HepG2 (cell line): ENCODE measurements at regions of chr2 and their contacts with region 1.

Region 1: DNA sequence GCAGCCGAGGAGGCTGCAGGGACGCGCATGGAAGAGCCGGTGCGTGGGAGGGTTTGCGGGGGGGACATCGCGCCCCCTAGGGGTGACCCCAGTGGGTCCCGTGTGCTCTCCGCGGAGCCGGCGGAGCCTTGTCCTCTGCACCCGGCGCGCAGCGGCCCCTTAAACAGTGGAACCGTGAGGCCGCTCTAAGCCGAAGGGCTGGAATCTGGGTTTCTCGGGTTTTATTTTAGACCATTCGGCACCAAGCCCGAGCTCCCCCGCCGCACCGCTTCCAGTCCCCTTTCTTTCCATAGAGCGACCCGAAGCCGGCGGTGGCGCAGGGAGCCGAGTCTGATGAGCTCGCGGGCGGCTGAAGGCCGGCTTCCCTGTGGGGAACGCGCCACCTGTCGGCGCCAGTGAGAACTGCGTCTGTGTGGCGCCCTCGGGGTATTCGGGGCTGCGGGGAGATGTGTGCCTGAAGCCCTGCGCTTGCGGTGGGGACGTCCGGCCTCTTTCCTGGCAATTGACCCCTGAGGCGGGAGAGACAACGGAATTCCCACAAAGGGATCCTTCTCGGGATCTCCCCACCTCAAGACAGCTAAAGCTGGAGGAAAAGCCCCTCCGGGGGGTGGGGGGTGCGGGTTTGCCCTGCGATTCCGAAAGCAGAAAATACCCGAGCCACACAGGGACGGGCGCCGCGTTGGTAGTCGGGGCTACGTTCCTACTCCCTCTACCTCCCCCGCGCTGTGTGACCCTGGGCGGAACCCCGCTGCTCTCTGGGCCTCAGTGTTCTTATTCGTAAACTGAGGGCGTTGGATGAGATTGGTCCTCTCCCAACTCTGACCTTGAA is 8.2 kb upstream of the EN1 start:
- DNase-seq: peak; percentile 60
- ATAC-seq: peak; percentile 93
- H3K4me3 ChIP-seq: peak overlapping the region in 1 of 3 experiments; percentile 34; a peak in 1 of 6 replicates
- H3K27ac ChIP-seq: no peak overlapping the region
- H3K4me1 ChIP-seq: no peaks in the 10 kb centered on the region
- H3K27me3 ChIP-seq: peaks cover 27 to 95% of the 10 kb centered on the region in 2 experiments
- CTCF ChIP-seq: peak; percentile 98
- EP300 ChIP-seq: no peak
- POLR2A ChIP-seq: no peak
- RAD21 ChIP-seq: peak; percentile 97

Region 2: GRCh38 chr2:118221666-118222594 is 633.7 kb before region 1 on chr2:
- CTCF ChIA-PET with region 1: interaction called, 20 read pairs
- POLR2A ChIA-PET with region 1: no interaction called
- in situ Hi-C with region 1: loop called (anchors 5 kb)
- intact Hi-C with region 1: no loop called
- DNase-seq: peak; percentile 61
- ATAC-seq: peak; percentile 97
- H3K4me3 ChIP-seq: no peak overlapping the region
- H3K27ac ChIP-seq: no peak overlapping the region
- H3K4me1 ChIP-seq: no peaks in the 10 kb centered on the region
- H3K27me3 ChIP-seq: peaks cover 2 to 14% of the 10 kb centered on the region in 2 experiments; a peak in 3 of 5 replicates
- CTCF ChIP-seq: peak; percentile 81
- EP300 ChIP-seq: no peak
- POLR2A ChIP-seq: no peak
- RAD21 ChIP-seq: peak; percentile 50; the same call in 1 of the 2 replicates

Region 3: DNA sequence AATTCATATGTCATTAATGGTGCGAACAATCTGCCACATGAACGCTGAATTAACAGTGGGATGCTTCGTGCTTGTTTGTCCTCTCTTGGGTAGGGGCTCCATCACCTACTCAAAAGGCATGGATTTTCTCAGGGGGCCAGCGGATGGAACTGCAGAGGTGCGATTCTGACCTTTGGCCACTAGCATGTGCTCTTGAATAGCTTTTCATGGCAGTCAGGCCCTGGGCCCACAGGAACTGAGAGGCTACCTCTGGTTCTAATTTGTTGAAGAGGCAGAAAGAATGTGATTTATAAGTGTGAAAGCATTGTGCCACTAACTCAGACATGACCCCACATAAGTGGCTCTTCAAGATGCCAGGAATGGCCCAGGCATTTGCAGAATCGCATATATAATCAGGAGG is 484.1 kb before region 1 on chr2:
- CTCF ChIA-PET with region 1: interaction called, 20 read pairs
- POLR2A ChIA-PET with region 1: no interaction called
- in situ Hi-C with region 1: loop called (anchors 5 kb)
- intact Hi-C with region 1: loop called (anchors 1 kb)
- DNase-seq: peak; percentile 42
- ATAC-seq: peak; percentile 99
- H3K4me3 ChIP-seq: no peak overlapping the region
- H3K27ac ChIP-seq: no peak overlapping the region
- H3K4me1 ChIP-seq: no peaks in the 10 kb centered on the region
- H3K27me3 ChIP-seq: no peaks in the 10 kb centered on the region; a peak in 2 of 5 replicates
- CTCF ChIP-seq: peak; percentile 89
- EP300 ChIP-seq: no peak
- POLR2A ChIP-seq: no peak
- RAD21 ChIP-seq: peak; percentile 64

Region 4: DNA sequence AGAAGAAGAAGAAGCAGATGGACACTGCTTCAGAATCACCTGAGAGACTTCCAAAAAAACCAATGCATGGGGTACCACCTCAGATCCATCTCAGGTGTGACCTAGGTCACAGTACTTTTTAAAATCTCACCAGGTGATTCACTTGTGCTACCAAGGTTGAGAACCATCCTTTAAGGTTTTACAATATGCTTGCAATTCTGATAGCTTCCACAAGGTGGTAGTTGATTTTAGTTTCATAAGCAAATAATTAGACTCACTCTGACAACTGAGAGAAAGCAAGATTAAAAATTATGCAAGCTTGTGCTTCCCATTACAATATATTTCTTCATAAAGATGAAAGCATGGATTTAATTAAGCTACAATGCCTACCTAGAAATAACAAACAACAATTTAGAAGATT is 363.3 kb before region 1 on chr2:
- CTCF ChIA-PET with region 1: interaction called, 3 read pairs
- POLR2A ChIA-PET with region 1: no interaction called
- in situ Hi-C with region 1: no loop called
- intact Hi-C with region 1: loop called (anchors 2 kb)
- DNase-seq: peak; percentile 23
- ATAC-seq: no peak
- H3K4me3 ChIP-seq: no peak overlapping the region
- H3K27ac ChIP-seq: no peak overlapping the region
- H3K4me1 ChIP-seq: no peaks in the 10 kb centered on the region
- H3K27me3 ChIP-seq: no peaks in the 10 kb centered on the region; a peak in 1 of 5 replicates
- CTCF ChIP-seq: peak; percentile 29; the same call in 1 of the 2 replicates
- EP300 ChIP-seq: no peak
- POLR2A ChIP-seq: no peak
- RAD21 ChIP-seq: no peak

Region 5: GRCh38 chr2:118539290-118539689 is 316.4 kb before region 1 on chr2:
- CTCF ChIA-PET with region 1: no interaction called
- POLR2A ChIA-PET with region 1: no interaction called
- in situ Hi-C with region 1: no loop called
- intact Hi-C with region 1: loop called (anchors 1 kb)
- DNase-seq: peak; percentile 14
- ATAC-seq: peak; percentile 79
- H3K4me3 ChIP-seq: no peak overlapping the region
- H3K27ac ChIP-seq: no peak overlapping the region
- H3K4me1 ChIP-seq: no peaks in the 10 kb centered on the region
- H3K27me3 ChIP-seq: no peaks in the 10 kb centered on the region
- CTCF ChIP-seq: peak; percentile 49
- EP300 ChIP-seq: no peak
- POLR2A ChIP-seq: no peak
- RAD21 ChIP-seq: no peak

Region 6: DNA sequence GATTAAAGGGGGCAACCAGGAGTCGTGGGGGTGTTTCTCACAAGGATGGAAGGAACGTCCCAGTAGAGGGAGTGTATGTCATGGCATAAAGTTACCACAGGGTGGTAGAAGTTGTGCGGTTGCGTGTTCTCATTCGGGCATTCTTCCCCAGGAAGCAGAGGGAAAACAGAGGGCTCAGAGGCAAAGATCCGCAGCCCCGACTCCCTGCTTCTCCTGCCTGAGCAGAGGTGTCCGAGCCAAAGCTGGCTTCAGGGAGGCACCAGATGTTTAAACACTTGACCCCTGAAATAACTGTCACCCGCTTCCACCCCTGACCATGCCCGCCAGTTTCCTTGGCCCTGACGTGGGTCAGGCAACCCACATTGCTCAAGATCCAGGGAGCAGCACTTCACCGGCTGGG is 91.9 kb before region 1 on chr2:
- CTCF ChIA-PET with region 1: no interaction called
- POLR2A ChIA-PET with region 1: no interaction called
- in situ Hi-C with region 1: no loop called
- intact Hi-C with region 1: loop called (anchors 2 kb)
- DNase-seq: peak; percentile 8
- ATAC-seq: peak; percentile 95
- H3K4me3 ChIP-seq: no peak overlapping the region
- H3K27ac ChIP-seq: no peak overlapping the region
- H3K4me1 ChIP-seq: no peaks in the 10 kb centered on the region
- H3K27me3 ChIP-seq: peaks cover 0 to 16% of the 10 kb centered on the region in 2 experiments; a peak in 3 of 5 replicates
- CTCF ChIP-seq: peak; percentile 29
- EP300 ChIP-seq: no peak
- POLR2A ChIP-seq: no peak
- RAD21 ChIP-seq: no peak

Region 7: GRCh38 chr2:118918017-118918416 is 62.4 kb after region 1 on chr2:
- CTCF ChIA-PET with region 1: no interaction called
- POLR2A ChIA-PET with region 1: no interaction called
- in situ Hi-C with region 1: no loop called
- intact Hi-C with region 1: no loop called
- DNase-seq: no peak
- ATAC-seq: no peak
- H3K4me3 ChIP-seq: no peak overlapping the region
- H3K27ac ChIP-seq: no peak overlapping the region
- H3K4me1 ChIP-seq: no peaks in the 10 kb centered on the region
- H3K27me3 ChIP-seq: peaks cover 0 to 2% of the 10 kb centered on the region in 2 experiments; a peak in 1 of 5 replicates
- CTCF ChIP-seq: no peak
- EP300 ChIP-seq: no peak
- POLR2A ChIP-seq: no peak
- RAD21 ChIP-seq: no peak